Dendritic cell treated with granulocyte-macrophage colony-stimulating factor and Interleukin-4, amounts not matched to agents 40 ng/mL and 50 ng/mL, for 4 days (primary cell): ENCODE measurements at regions of chr9 and their contacts with region 1.

Region 1: GRCh38 chr9:136339173-136339957 is 12.0 kb downstream of the GPSM1 start:
- H3K4me3 Mint-ChIP-seq: no peak overlapping the region
- H3K27ac Mint-ChIP-seq: no peak overlapping the region
- H3K4me1 Mint-ChIP-seq: peaks cover 12% of the 10 kb centered on the region
- H3K27me3 Mint-ChIP-seq: peaks cover 2% of the 10 kb centered on the region

Region 2: GRCh38 chr9:136631038-136632000 is 292.0 kb after region 1 on chr9:
- intact Hi-C with region 1: loop called (anchors 10 kb)
- H3K4me3 Mint-ChIP-seq: no peak overlapping the region
- H3K27ac Mint-ChIP-seq: no peak overlapping the region
- H3K4me1 Mint-ChIP-seq: peaks cover 5% of the 10 kb centered on the region
- H3K27me3 Mint-ChIP-seq: peaks cover 43% of the 10 kb centered on the region